H1 (cell line): ENCODE measurements at regions of chr6 and their contacts with region 1.

Region 1: GRCh38 chr6:14321992-14322772 is 204.6 kb downstream of the CD83 start:
- DNase-seq: no peak
- H3K4me3 ChIP-seq: no peak overlapping the region
- H3K27ac ChIP-seq: no peak overlapping the region
- H3K4me1 ChIP-seq: peaks cover 0 to 7% (median 3%) of the 10 kb centered on the region in 4 experiments; a peak in 3 of 7 replicates
- H3K27me3 ChIP-seq: no peaks in the 10 kb centered on the region; a peak in 1 of 7 replicates
- CTCF ChIP-seq: peak in 2 of 3 experiments; percentile 27 to 34; a peak in 2 of 4 replicates
- EP300 ChIP-seq: no peak
- POLR2A ChIP-seq: no peak
- RAD21 ChIP-seq: peak; percentile 44 to 65

Region 2: DNA sequence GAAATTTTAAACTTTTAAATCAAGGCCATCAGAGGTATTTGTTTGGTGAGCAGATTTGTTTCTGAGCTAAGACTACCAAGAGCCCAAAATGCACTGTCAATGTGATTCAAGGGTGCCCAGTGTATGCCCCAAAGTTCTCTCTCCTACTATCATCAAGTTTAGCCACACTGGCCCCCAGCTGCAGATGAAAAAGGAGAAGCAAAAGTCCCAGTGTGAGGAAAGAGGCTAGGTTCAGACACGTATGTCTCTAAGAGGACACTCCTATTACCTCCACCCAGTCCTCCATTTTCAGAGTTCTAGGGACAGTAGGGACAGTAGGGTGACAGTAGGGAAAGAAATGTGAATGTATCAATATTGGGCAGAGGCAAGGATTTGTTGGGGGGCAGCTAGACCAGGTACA is 26.2 kb after region 1 on chr6:
- CTCF ChIA-PET with region 1: interaction called, 13 read pairs
- POLR2A ChIA-PET with region 1: no interaction called
- DNase-seq: no peak
- H3K4me3 ChIP-seq: no peak overlapping the region
- H3K27ac ChIP-seq: no peak overlapping the region
- H3K4me1 ChIP-seq: peaks cover 0 to 4% (median 2%) of the 10 kb centered on the region in 4 experiments; a peak in 2 of 7 replicates
- H3K27me3 ChIP-seq: no peaks in the 10 kb centered on the region; a peak in 1 of 7 replicates
- CTCF ChIP-seq: no peak
- EP300 ChIP-seq: no peak
- POLR2A ChIP-seq: no peak
- RAD21 ChIP-seq: no peak